HAP-1 (cell line): ENCODE measurements at regions of chr18 and their contacts with region 1.

Region 1: GRCh38 chr18:50057009-50057408 is 137.9 kb downstream of the MYO5B start:
- DNase-seq: no peak
- H3K4me3 ChIP-seq: no peak overlapping the region
- H3K4me1 ChIP-seq: no peaks in the 10 kb centered on the region
- H3K27me3 ChIP-seq: no peaks in the 10 kb centered on the region

Region 2: GRCh38 chr18:50194631-50195532 is 137.9 kb after region 1 on chr18 and contains the start of gene MYO5B:
- in situ Hi-C with region 1: loop called (anchors 5 kb)
- DNase-seq: peak; percentile 49 to 81
- H3K4me3 ChIP-seq: peak within 1 kb of the TSS; percentile 62
- H3K4me1 ChIP-seq: peaks cover 10% of the 10 kb centered on the region
- H3K27me3 ChIP-seq: 0 out of 2 replicates have a peak, but pooled peaks cover 2% of the 10 kb centered on the region